OCI-LY7 (cell line): ENCODE measurements at regions of chr14 and their contacts with region 1.

Region 1: DNA sequence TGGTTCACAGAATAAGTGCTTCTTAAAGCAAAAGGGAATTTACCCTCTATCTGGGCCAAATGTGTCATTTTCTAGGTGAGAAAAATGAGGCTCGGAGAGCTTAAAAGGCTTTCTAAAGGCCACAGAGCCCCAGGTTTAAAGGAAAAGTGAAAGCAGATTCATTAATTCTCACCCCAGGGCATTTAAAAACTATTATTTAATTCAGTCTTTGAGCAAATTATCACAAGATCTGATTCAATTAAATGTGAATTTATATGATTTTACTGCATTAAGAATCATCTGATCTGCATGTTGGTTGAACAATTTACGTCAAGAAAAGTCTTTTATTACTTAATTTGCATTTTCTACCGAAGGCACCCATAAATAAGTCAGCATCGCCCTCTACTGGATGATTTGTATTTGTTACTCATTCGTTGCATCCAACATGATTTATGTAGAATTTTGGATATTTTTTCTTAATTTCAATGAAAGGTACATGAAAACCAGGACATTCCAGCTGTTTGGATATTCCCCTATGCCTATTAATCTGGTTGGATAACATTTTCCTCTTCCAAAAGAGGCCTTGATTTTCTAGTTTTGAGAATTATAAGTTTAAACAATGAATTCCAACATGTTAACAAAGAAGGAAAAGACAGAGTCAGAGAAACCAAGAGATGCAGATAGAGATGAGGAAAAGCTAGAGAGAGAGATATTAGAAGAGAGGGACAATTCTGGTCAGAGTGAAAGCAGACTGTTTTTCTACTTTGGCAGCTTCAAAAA is 19.1 kb upstream of the DHRS7 start:
- DNase-seq: peak; percentile 91
- H3K4me3 ChIP-seq: peak overlapping the region; percentile 65
- H3K27ac ChIP-seq: peak overlapping the region; percentile 42
- H3K4me1 ChIP-seq: peaks cover 38% of the 10 kb centered on the region
- CTCF ChIP-seq: peak; percentile 100

Region 2: DNA sequence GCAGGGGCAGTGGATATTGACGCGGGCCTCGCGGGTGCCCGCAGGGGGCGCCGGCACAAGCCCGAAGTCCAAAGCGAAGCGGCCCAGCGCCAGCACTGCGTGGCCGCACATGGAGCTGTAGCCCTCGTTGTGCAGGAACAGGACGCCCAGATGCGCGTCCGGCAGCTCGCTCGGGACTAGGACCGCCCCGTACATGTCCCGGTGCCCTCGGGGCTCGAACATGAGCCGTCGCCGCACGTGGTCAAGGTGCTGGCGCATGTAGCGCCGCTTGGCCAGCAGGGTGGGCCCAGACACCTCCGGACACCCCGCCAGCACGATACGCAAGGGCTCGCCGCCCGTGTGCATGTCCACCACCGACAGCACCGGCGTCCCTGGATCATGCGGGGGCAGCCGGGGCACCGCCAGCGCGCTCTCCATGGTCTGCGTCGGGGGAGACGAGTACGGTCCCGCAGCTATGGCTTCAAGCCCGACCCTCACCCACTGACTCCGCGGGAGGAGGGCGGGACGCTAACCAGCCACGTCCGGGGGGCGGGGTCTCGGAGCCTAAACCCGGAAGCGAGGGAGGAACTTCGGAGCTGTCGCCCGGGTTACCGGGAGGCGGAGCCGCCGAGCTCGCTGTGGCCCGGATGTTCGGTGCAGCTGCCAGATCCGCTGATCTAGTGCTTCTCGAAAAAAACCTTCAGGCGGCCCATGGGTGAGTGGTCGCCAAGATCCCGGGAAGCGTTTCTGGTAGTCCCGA is 700.3 kb before region 1 on chr14 and contains the starts of genes JKAMP and L3HYPDH:
- CTCF ChIA-PET with region 1: no interaction called
- POLR2A ChIA-PET with region 1: no interaction called
- intact Hi-C with region 1: loop called (anchors 10 kb)
- DNase-seq: peak; percentile 98
- H3K4me3 ChIP-seq: peak within 1 kb of the TSS; percentile 87
- H3K27ac ChIP-seq: peak within 1 kb of the TSS; percentile 58
- H3K4me1 ChIP-seq: peaks cover 38% of the 10 kb centered on the region
- CTCF ChIP-seq: peak; percentile 69
- total RNA-seq, gene JKAMP: 19.7 and 24.9 TPM in 2 replicates
- total RNA-seq, gene L3HYPDH: 43.2 and 43.5 TPM in 2 replicates

Region 3: DNA sequence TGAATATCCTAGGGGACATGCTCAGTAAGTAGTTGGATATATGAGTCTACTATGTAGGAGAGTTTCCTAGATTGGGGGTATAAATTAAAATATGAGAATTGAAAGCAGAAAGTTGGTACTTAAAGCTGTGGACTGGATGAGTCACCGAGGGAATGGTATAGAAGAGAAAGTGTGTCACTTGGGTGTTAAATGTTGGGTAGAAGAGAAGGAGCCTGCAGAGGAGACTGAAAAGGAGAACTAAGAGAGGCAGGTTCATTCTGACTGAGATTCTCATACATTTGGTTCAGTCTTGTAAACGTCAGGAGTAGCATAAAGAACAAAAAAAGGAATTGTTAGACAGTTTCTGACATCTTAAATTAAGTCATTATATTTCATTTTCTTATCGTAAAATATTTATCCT is 244.5 kb before region 1 on chr14:
- CTCF ChIA-PET with region 1: no interaction called
- POLR2A ChIA-PET with region 1: interaction called, 5 read pairs
- intact Hi-C with region 1: loop called (anchors 5 kb)
- DNase-seq: no peak
- H3K4me3 ChIP-seq: no peak overlapping the region
- H3K27ac ChIP-seq: no peak overlapping the region
- H3K4me1 ChIP-seq: no peaks in the 10 kb centered on the region
- CTCF ChIP-seq: no peak

Region 4: GRCh38 chr14:60091550-60092530 is 92.5 kb before region 1 on chr14 and contains the start of gene PCNX4:
- CTCF ChIA-PET with region 1: no interaction called
- POLR2A ChIA-PET with region 1: interaction called, 13 read pairs
- intact Hi-C with region 1: no loop called
- DNase-seq: peak; percentile 99
- H3K4me3 ChIP-seq: peak within 1 kb of the TSS; percentile 82
- H3K27ac ChIP-seq: peak within 1 kb of the TSS; percentile 86
- H3K4me1 ChIP-seq: peaks cover 33% of the 10 kb centered on the region
- CTCF ChIP-seq: no peak
- total RNA-seq, gene PCNX4: 47.0 and 49.1 TPM in 2 replicates

Region 5: DNA sequence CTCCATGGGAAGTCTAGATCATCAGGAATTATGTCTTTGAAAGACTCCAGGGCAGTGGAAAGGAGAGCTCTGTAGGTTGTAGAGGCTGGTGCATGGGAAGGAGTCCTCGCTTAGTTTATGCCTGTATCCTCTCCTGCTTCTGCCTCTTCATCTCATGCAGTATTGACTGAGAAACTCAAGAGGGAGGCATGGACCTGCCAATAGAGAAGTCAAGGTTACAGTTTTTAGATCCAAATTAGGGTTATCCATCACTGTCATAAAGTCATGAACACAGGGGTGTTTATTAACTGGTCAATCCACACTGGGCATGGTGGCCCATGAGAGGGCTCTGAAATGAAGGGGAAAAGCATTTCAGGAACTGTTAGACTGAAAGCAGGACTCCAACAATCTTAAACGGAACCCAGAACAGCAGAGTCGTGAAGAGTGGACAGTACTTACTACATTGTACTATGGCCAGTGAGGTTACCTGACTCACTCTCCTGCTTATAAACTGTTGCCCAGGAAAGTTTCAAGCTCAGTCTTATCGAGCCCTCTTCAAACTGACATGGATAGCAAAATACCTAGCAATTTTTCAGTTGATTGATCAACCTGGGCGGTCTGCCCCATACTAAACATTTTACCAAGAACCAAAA is 11.0 kb after region 1 on chr14:
- CTCF ChIA-PET with region 1: no interaction called
- POLR2A ChIA-PET with region 1: interaction called, 13 read pairs
- intact Hi-C with region 1: no loop called
- DNase-seq: peak; percentile 67
- H3K4me3 ChIP-seq: no peak overlapping the region
- H3K27ac ChIP-seq: no peak overlapping the region
- H3K4me1 ChIP-seq: peaks cover 24% of the 10 kb centered on the region
- CTCF ChIP-seq: peak; percentile 78

Region 6: GRCh38 chr14:60349663-60350365 is 165.5 kb after region 1 on chr14:
- CTCF ChIA-PET with region 1: no interaction called
- POLR2A ChIA-PET with region 1: interaction called, 5 read pairs
- intact Hi-C with region 1: loop called (anchors 1 kb)
- DNase-seq: peak; percentile 83
- H3K4me3 ChIP-seq: peak overlapping the region; percentile 57
- H3K27ac ChIP-seq: peak overlapping the region; percentile 95
- H3K4me1 ChIP-seq: peaks cover 61% of the 10 kb centered on the region
- CTCF ChIP-seq: peak; percentile 96